Esophagus muscularis mucosa (tissue), 4 donors: ENCODE measurements at regions of chr12 and their contacts with region 1.

Region 1: GRCh38 chr12:62731055-62731820 is 203.7 kb downstream of the PPM1H start:
- DNase-seq: no peak
- H3K4me3 ChIP-seq: peak overlapping the region in 3 of 4 donors; percentile 18 to 35 (median 26)
- H3K27ac ChIP-seq: peak overlapping the region; percentile 40 to 66 (median 47)
- H3K4me1 ChIP-seq: peaks cover 26 to 50% (median 44%) of the 10 kb centered on the region in 4 donors
- H3K27me3 ChIP-seq: no peaks in the 10 kb centered on the region
- CTCF ChIP-seq: no peak
- EP300 ChIP-seq: no peak
- POLR2A ChIP-seq: no peak

Region 2: GRCh38 chr12:62631471-62632410 is 99.5 kb before region 1 on chr12:
- intact Hi-C with region 1: loop called (anchors 10 kb)
- DNase-seq: peak; percentile 92
- H3K4me3 ChIP-seq: peak overlapping the region; percentile 61 to 71 (median 64)
- H3K27ac ChIP-seq: peak overlapping the region; percentile 69 to 78 (median 73)
- H3K4me1 ChIP-seq: peaks cover 9 to 20% (median 18%) of the 10 kb centered on the region in 4 donors
- H3K27me3 ChIP-seq: no peaks in the 10 kb centered on the region
- CTCF ChIP-seq: peak; percentile 33 to 39 (median 39)
- EP300 ChIP-seq: no peak
- POLR2A ChIP-seq: no peak